ENCODE measurements at regions of chr12 and their contacts with region 1.

Region 1: DNA sequence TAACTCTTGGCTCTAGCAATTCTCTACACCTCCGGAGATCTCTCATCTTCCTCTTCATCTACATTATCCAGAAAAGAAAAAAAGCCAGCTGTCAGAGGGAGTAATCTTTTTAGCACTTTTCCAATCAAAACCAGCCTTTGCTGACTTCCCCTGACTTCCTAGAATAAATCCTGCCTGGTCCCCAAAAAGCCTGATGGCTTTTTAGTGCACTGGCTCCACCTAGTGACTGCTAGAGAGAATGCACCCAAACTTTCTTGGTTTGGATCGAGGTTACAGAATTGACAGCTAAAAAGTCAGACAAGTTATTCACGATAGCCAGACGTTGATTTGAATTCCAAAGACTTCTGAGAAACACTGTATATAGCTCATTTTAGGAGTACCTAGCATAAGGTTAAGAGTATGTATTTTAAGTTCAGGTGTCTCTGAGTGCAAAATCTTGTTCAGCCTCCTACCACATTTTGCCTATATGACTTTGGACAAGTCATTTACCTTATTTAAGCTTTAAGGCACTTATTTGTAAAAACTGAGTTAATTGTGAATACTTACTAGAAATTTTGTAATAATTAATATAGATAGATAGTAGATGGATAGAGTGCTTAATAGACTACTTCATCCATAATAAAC is 185.7 kb upstream of the GRIN2B start:
- DNase-seq: peak; percentile 15
- H3K4me3 ChIP-seq: no peak overlapping the region
- H3K27ac ChIP-seq: no peak overlapping the region
- H3K4me1 ChIP-seq: no peaks in the 10 kb centered on the region
- H3K27me3 ChIP-seq: no peaks in the 10 kb centered on the region
- CTCF ChIP-seq: peak; percentile 51 to 79 (median 75)
- POLR2A ChIP-seq: no peak

Region 2: DNA sequence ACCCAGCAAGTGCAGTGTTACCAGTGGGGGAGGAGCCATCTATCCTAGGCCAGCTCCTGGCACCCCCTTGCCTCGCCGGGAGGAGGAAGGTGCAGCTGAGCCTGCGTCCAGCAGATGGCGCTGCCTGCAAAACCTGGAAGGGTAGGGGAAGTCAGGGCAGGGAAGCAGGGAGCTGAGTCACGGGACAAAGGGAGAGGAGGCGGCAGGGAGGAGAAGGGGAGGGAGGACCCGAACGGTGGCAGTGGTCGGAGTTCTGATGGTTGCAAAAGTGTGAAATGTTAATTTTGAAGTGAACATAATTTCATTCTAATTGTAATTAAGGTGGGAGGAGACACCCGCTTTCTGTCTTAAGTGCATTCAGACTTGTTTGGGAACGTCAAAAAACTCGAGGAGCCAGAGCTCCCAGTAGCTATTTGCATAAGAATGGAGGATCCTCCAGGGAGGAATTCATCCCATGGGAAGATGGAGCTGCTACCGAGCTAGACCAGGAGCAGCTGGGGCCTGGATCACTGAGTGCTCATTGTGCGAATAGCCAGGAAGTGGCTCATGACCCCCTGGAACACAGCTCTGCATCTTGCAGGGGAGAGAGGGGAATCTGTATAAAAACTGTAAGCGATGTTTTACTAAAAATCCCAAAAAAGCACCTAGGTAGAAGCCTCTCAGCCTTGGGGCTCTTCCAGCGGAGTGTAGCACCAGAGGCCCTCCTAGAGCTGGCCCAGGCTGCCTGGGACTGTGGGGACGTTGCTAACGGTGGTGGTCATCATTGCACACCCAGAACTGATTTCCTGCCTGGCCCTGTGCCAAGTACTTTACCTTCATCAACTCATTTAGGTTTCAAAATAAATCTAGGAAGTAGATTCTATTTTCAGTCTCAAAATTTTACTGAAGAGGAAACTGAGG is 911.1 kb before region 1 on chr12:
- intact Hi-C with region 1: loop called (anchors 10 kb)
- DNase-seq: peak; percentile 75
- H3K4me3 ChIP-seq: no peak overlapping the region
- H3K27ac ChIP-seq: peak overlapping the region in 1 of 2 donors; percentile 31
- H3K4me1 ChIP-seq: no peaks in the 10 kb centered on the region
- H3K27me3 ChIP-seq: no peaks in the 10 kb centered on the region
- CTCF ChIP-seq: peak; percentile 77 to 93 (median 90)
- POLR2A ChIP-seq: no peak

Region 3: DNA sequence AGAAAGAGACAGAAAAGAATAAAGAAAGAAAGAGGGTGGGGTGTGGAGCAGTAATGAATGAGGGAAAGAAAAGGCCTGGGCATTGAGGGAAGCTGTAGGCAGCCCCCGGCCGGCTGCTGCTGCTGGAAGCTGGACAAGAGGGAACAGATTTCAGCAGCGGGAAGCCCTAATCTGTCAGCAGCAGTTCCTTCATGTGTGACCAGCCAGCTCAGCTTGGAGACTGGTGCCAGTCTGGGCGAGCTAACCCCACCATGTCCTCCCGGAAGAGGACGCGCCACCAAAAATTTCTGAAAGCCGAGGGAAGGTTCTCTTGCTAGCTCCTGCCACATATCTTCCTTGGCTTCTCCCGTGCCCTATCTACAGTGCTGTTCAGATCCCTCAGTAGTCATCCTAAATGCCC is 422.6 kb before region 1 on chr12:
- intact Hi-C with region 1: loop called (anchors 5 kb)
- DNase-seq: no peak
- H3K4me3 ChIP-seq: no peak overlapping the region
- H3K27ac ChIP-seq: no peak overlapping the region
- H3K4me1 ChIP-seq: no peaks in the 10 kb centered on the region
- H3K27me3 ChIP-seq: no peaks in the 10 kb centered on the region
- CTCF ChIP-seq: no peak
- POLR2A ChIP-seq: no peak

Region 4: GRCh38 chr12:13864081-13864673 is 302.9 kb before region 1 on chr12:
- intact Hi-C with region 1: loop called (anchors 10 kb)
- DNase-seq: peak; percentile 28
- H3K4me3 ChIP-seq: no peak overlapping the region
- H3K27ac ChIP-seq: no peak overlapping the region
- H3K4me1 ChIP-seq: no peaks in the 10 kb centered on the region
- H3K27me3 ChIP-seq: peaks cover 2% of the 10 kb centered on the region
- CTCF ChIP-seq: peak; percentile 36 to 62 (median 60)
- POLR2A ChIP-seq: no peak

Region 5: DNA sequence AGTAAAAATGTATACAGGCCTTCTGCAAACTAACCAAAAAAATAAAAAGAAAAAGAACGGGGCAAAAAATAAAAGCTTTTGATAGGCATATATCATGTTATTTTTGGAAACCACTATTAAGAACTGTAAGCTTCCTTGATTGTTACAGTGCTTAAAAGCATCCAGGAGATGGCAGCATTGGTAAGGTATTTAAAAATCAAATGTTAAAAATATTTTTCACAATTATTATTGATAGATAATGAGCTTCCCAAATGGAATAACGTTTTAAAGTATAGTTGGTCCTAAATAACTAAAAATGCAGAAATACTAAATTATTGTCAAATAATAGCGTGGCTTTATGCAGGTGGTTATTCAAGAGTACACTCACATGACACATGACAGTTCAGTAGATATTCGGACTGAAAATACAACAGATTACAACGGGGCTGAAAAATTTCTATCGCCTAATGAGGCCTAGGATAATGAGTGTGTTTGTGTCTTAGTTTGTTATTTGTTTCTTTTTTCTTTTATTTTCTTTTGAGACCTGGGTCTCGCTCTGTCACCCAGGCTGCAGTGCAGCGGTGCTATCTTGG is 71.2 kb after region 1 on chr12:
- intact Hi-C with region 1: no loop called
- DNase-seq: no peak
- H3K4me3 ChIP-seq: no peak overlapping the region
- H3K27ac ChIP-seq: no peak overlapping the region
- H3K4me1 ChIP-seq: no peaks in the 10 kb centered on the region
- H3K27me3 ChIP-seq: no peaks in the 10 kb centered on the region
- CTCF ChIP-seq: peak in 3 of 4 experiments; percentile 63 to 77 (median 75)
- POLR2A ChIP-seq: no peak

Region 6: GRCh38 chr12:14327711-14328381 is 160.7 kb after region 1 on chr12:
- intact Hi-C with region 1: no loop called
- DNase-seq: no peak
- H3K4me3 ChIP-seq: no peak overlapping the region
- H3K27ac ChIP-seq: no peak overlapping the region
- H3K4me1 ChIP-seq: no peaks in the 10 kb centered on the region
- H3K27me3 ChIP-seq: no peaks in the 10 kb centered on the region
- CTCF ChIP-seq: no peak
- POLR2A ChIP-seq: no peak

Measured in prostate gland (tissue), 2 donors.